Esophagus squamous epithelium (tissue), 5 donors: ENCODE measurements at regions of chr11 and their contacts with region 1.

Region 1: DNA sequence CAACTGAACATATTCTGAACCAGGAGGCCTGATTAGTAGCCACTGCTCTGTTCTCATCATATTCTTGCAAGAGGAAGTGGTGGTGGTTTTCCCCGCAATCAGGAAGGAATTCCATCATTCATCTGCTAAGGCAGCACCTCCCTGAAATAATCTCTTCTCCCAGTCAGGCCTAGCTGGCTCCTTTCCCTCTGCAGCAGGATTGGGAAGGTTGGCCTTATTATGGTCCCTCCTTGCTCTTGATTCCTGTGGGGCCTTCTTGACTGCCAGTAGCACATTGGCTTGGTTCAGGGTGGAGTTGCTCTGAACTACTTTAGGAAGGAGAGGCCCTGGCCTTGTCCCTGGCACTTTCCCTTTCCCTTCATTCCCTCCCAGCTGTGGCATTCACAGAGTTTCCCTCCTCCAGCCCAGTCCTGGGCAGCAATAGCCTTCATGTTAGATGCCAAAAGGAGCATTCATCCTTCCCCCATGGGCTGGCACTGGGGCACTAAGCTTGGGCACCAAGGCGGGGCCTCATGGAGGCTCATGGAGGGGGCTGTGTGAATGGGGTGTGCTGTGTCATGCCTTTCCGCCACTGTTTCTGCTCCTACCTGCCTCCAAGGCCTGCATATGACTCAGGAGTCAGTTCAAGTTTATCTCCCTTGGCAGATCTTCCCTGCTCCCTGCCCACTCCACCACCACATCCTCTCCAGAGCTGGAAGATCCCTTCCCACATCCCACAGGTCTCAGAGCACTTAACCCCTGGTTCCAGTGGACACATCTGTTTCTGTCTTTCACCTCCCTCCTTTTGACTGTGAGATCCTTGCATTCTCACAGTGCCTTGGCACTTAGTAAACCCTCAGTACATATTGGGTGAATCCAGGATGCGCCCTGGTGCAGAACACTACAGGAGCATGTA is 27.6 kb upstream of the CD44 start:
- DNase-seq: no peak
- H3K4me3 ChIP-seq: no peak overlapping the region
- H3K27ac ChIP-seq: peak overlapping the region; percentile 75 to 86 (median 76)
- H3K4me1 ChIP-seq: peaks cover 30 to 54% (median 39%) of the 10 kb centered on the region in 3 donors
- H3K27me3 ChIP-seq: no peaks in the 10 kb centered on the region
- CTCF ChIP-seq: no peak
- POLR2A ChIP-seq: no peak

Region 2: GRCh38 chr11:35006389-35007128 is 104.8 kb before region 1 on chr11:
- intact Hi-C with region 1: loop called (anchors 10 kb)
- DNase-seq: no peak
- H3K4me3 ChIP-seq: no peak overlapping the region
- H3K27ac ChIP-seq: no peak overlapping the region
- H3K4me1 ChIP-seq: peaks cover 0 to 69% (median 20%) of the 10 kb centered on the region in 3 donors
- H3K27me3 ChIP-seq: no peaks in the 10 kb centered on the region
- CTCF ChIP-seq: no peak
- POLR2A ChIP-seq: no peak